ENCODE measurements at regions of chr2 and their contacts with region 1.

Region 1: DNA sequence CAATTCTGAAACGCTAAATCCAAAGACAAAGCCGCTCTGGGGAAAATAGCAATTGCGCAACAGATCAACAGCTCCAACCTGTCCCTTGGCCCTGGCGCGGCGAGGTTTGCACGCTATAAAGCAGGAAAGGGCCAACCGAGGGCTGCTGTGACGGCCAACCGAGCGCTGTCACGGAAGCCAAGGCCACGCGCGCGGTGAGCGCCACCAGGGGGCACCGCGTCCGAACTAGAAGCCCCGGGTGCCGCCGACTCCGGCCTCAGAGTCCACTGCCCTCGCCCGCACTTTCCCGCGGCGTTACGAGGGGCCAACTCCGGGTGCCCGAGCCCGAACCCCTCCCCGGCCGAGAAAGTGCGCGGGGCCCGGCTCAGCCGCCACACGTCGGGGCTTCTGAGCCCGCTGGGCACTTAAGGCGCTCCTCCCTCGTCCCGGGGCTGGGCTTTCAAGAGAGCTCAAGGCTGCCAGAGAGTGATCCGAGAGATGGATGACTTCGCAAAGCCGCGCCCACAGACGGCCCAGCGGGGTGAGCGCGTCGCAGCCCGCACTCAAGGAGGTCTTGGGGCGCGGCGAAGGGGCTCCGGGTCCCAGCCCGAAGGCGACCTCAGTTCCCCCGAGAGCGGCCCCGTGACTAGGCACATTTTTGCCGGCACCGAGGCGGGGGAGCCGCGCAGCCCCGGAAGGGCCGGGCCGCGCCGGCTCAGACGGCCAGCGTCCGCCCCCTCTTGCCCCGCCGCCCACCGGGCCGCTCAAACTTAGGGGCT is 897 bp downstream of the NFE2L2 start:
- DNase-seq: peak; percentile 91 to 98 (median 96)
- ATAC-seq: peak; percentile 66
- H3K4me3 ChIP-seq: peak overlapping the region; percentile 72
- H3K4me3 Mint-ChIP-seq: peak overlapping the region; percentile 98
- H3K27ac ChIP-seq: peak overlapping the region; percentile 96 to 100
- H3K27ac Mint-ChIP-seq: peak overlapping the region; percentile 99
- H3K4me1 ChIP-seq: peaks cover 31% of the 10 kb centered on the region
- H3K4me1 Mint-ChIP-seq: peaks cover 65% of the 10 kb centered on the region
- H3K27me3 ChIP-seq: no peaks in the 10 kb centered on the region
- H3K27me3 Mint-ChIP-seq: no peaks in the 10 kb centered on the region
- CTCF ChIP-seq: peak; percentile 88

Region 2: DNA sequence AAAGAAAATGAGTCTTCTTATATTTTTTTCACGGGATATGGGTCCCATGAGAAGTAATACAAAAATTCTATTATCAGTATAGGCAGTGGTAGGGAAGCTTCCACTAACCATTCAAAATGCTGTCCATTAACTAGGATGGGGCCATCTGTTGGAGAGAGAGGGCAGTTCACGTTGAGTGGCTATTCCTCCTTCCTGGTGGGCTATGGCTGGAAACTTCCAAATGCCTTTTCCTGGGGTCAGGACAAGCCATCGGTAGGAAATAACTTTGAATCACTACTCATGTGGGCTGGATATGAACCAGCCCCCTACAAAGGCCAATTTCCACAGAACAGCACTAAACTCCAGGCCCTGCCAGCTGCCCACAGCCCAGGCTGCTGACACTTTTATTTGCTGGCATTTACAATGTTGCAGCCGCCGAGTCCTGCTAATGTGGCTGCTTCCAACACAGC is 207.1 kb before region 1 on chr2:
- CTCF ChIA-PET with region 1: no interaction called
- POLR2A ChIA-PET with region 1: no interaction called
- intact Hi-C with region 1: no loop called
- DNase-seq: no peak
- ATAC-seq: no peak
- H3K4me3 ChIP-seq: no peak overlapping the region
- H3K4me3 Mint-ChIP-seq: no peak overlapping the region
- H3K27ac ChIP-seq: no peak overlapping the region
- H3K27ac Mint-ChIP-seq: no peak overlapping the region
- H3K4me1 ChIP-seq: no peaks in the 10 kb centered on the region
- H3K4me1 Mint-ChIP-seq: no peaks in the 10 kb centered on the region
- H3K27me3 ChIP-seq: no peaks in the 10 kb centered on the region
- H3K27me3 Mint-ChIP-seq: peaks cover 7% of the 10 kb centered on the region
- CTCF ChIP-seq: no peak

Region 3: GRCh38 chr2:177212106-177212890 is 51.3 kb before region 1 on chr2 and contains the start of gene HNRNPA3:
- CTCF ChIA-PET with region 1: interaction called, 14 read pairs
- POLR2A ChIA-PET with region 1: interaction called, 309 read pairs
- intact Hi-C with region 1: loop called (anchors 1 kb)
- DNase-seq: peak; percentile 99 to 100 (median 100)
- ATAC-seq: peak; percentile 81
- H3K4me3 ChIP-seq: peak within 1 kb of the TSS; percentile 86
- H3K4me3 Mint-ChIP-seq: peak within 1 kb of the TSS; percentile 88
- H3K27ac ChIP-seq: peak within 1 kb of the TSS; percentile 98 to 100
- H3K27ac Mint-ChIP-seq: peak within 1 kb of the TSS; percentile 99
- H3K4me1 ChIP-seq: peaks cover 37% of the 10 kb centered on the region
- H3K4me1 Mint-ChIP-seq: peaks cover 61% of the 10 kb centered on the region
- H3K27me3 ChIP-seq: no peaks in the 10 kb centered on the region
- H3K27me3 Mint-ChIP-seq: no peaks in the 10 kb centered on the region
- CTCF ChIP-seq: peak; percentile 33
- total RNA-seq, gene HNRNPA3: 162 to 167 TPM

Region 4: DNA sequence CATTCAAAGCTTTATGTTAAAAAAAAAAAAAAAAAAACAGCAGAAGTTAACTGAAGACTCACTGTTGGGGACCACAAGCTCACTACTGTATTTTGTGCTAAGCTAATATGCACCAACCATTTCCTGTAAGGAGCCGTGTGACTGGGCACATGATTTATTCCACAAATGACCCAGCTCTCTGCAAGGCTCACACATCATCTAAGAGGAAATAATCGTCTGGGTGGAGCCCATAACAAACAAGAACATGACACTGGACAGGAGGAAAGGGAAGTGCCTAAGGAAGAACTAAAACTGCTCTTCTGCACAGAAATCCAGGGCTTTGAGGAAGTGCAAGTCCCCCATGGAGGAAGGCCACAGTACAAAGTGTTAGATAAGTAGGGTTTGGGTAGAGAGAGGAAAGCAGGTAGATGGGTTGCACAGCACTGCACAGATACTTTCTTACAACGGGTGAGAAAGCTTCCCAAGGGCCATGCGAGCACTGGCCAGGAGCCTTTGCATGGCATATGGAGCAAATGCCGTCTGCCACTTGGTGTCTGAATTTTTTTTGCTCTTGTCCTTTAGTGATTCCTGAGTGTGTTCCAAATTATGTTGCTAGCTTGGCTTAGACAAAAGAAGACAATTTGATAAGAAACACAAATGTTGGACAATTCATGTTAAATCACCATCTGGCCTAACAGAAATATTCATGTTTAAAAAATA is 23.5 kb before region 1 on chr2:
- CTCF ChIA-PET with region 1: interaction called, 46 read pairs
- POLR2A ChIA-PET with region 1: interaction called, 118 read pairs
- intact Hi-C with region 1: loop called in 1 of 2 experiments (anchors 1 kb)
- DNase-seq: peak in 5 of 14 experiments; percentile 26 to 79 (median 73)
- ATAC-seq: peak; percentile 75
- H3K4me3 ChIP-seq: no peak overlapping the region
- H3K4me3 Mint-ChIP-seq: peak overlapping the region; percentile 32
- H3K27ac ChIP-seq: peak overlapping the region; percentile 3 to 46
- H3K27ac Mint-ChIP-seq: peak overlapping the region; percentile 84
- H3K4me1 ChIP-seq: peaks cover 58% of the 10 kb centered on the region
- H3K4me1 Mint-ChIP-seq: peaks cover 84% of the 10 kb centered on the region
- H3K27me3 ChIP-seq: no peaks in the 10 kb centered on the region
- H3K27me3 Mint-ChIP-seq: no peaks in the 10 kb centered on the region
- CTCF ChIP-seq: no peak

Region 5: DNA sequence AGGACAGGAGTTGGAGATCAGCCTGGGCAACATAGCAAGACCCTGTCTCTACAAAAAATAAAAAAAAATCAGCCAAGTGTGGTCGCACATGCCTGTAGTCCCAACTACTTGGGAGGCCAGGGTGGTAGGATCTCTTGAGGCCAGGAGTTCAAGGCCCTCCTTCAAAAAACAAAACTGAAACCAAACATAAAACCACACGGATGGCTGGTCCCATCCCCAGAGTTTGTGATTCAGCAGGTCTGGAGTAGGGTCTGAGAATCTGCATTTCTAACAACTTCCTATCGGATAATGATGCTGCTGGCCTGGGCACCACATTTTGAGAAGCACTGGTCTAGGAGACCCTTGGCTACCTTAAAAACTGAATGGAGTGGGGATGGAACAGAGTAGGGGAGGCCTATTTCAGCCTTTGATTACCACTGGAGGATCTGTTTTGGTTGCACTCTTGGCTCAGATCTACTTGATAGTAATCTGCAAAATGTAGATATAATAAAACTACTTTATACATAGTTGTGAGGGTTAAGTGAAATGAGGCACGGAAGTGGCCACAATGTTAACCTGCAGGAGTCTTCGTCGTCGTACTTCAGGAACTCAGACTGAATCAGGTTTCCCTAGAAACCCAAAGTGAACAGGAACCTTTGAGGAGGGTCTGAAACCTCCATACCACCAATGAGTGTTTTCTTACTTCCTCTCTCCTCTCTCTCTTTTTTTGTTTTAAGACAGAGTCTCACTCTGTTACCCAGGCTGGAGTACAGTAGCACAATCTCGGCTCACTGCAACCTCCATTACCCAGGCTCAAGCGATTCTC is 26.4 kb after region 1 on chr2:
- CTCF ChIA-PET with region 1: interaction called, 29 read pairs
- POLR2A ChIA-PET with region 1: interaction called, 154 read pairs
- intact Hi-C with region 1: no loop called
- DNase-seq: peak in 4 of 14 experiments; percentile 24 to 43 (median 34)
- ATAC-seq: peak; percentile 56
- H3K4me3 ChIP-seq: peak overlapping the region; percentile 34
- H3K4me3 Mint-ChIP-seq: peak overlapping the region; percentile 65
- H3K27ac ChIP-seq: peak overlapping the region in 1 of 2 donors; percentile 58
- H3K27ac Mint-ChIP-seq: peak overlapping the region; percentile 92
- H3K4me1 ChIP-seq: peaks cover 15% of the 10 kb centered on the region
- H3K4me1 Mint-ChIP-seq: peaks cover 29% of the 10 kb centered on the region
- H3K27me3 ChIP-seq: no peaks in the 10 kb centered on the region
- H3K27me3 Mint-ChIP-seq: no peaks in the 10 kb centered on the region
- CTCF ChIP-seq: no peak

Region 6: GRCh38 chr2:177314194-177314593 is 50.6 kb after region 1 on chr2:
- CTCF ChIA-PET with region 1: interaction called, 7 read pairs
- POLR2A ChIA-PET with region 1: interaction called, 262 read pairs
- intact Hi-C with region 1: loop called in 1 of 2 experiments (anchors 5 kb)
- DNase-seq: no peak
- ATAC-seq: no peak
- H3K4me3 ChIP-seq: no peak overlapping the region
- H3K4me3 Mint-ChIP-seq: no peak overlapping the region
- H3K27ac ChIP-seq: no peak overlapping the region
- H3K27ac Mint-ChIP-seq: peak overlapping the region; percentile 90
- H3K4me1 ChIP-seq: peaks cover 19% of the 10 kb centered on the region
- H3K4me1 Mint-ChIP-seq: peaks cover 38% of the 10 kb centered on the region
- H3K27me3 ChIP-seq: no peaks in the 10 kb centered on the region
- H3K27me3 Mint-ChIP-seq: no peaks in the 10 kb centered on the region
- CTCF ChIP-seq: no peak

Region 7: GRCh38 chr2:177392373-177393202 is 129.0 kb after region 1 on chr2 and contains the start of gene AGPS:
- CTCF ChIA-PET with region 1: no interaction called
- POLR2A ChIA-PET with region 1: interaction called, 63 read pairs
- intact Hi-C with region 1: loop called (anchors 5 to 10 kb)
- DNase-seq: peak; percentile 53 to 87 (median 69)
- ATAC-seq: peak; percentile 90
- H3K4me3 ChIP-seq: peak within 1 kb of the TSS; percentile 80
- H3K4me3 Mint-ChIP-seq: peak within 1 kb of the TSS; percentile 94
- H3K27ac ChIP-seq: no peak within 1 kb of the TSS
- H3K27ac Mint-ChIP-seq: peak within 1 kb of the TSS; percentile 80
- H3K4me1 ChIP-seq: peaks cover 27% of the 10 kb centered on the region
- H3K4me1 Mint-ChIP-seq: peaks cover 66% of the 10 kb centered on the region
- H3K27me3 ChIP-seq: no peaks in the 10 kb centered on the region
- H3K27me3 Mint-ChIP-seq: no peaks in the 10 kb centered on the region
- CTCF ChIP-seq: no peak
- total RNA-seq, gene AGPS: 21.5 to 23.9 TPM

Region 8: DNA sequence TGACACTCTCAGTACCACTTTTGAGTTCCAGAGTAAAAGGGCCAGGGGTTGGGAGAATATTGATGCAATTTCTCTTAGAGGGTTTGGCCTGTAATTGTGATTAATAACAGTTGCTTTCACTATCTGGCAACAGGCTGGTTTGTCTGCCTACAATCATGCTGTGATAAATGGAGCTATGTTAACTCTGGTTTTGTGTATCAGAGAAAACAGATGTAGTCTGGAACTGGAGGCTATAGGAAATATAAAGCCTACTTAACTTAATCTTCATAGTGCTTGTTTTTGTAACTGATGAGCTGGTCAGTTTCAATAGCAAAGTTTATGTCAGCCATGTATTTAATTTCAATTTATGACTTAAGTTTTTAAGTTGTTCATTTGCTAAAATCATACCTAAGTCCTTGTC is 266.9 kb after region 1 on chr2:
- CTCF ChIA-PET with region 1: no interaction called
- POLR2A ChIA-PET with region 1: no interaction called
- intact Hi-C with region 1: no loop called
- DNase-seq: no peak
- ATAC-seq: no peak
- H3K4me3 ChIP-seq: no peak overlapping the region
- H3K4me3 Mint-ChIP-seq: no peak overlapping the region
- H3K27ac ChIP-seq: no peak overlapping the region
- H3K27ac Mint-ChIP-seq: no peak overlapping the region
- H3K4me1 ChIP-seq: no peaks in the 10 kb centered on the region
- H3K4me1 Mint-ChIP-seq: no peaks in the 10 kb centered on the region
- H3K27me3 ChIP-seq: no peaks in the 10 kb centered on the region
- H3K27me3 Mint-ChIP-seq: no peaks in the 10 kb centered on the region
- CTCF ChIP-seq: no peak

Measured in CD4-positive, alpha-beta T cell (primary cell).